ENCODE measurements at regions of chr13 and their contacts with region 1.

Region 1: DNA sequence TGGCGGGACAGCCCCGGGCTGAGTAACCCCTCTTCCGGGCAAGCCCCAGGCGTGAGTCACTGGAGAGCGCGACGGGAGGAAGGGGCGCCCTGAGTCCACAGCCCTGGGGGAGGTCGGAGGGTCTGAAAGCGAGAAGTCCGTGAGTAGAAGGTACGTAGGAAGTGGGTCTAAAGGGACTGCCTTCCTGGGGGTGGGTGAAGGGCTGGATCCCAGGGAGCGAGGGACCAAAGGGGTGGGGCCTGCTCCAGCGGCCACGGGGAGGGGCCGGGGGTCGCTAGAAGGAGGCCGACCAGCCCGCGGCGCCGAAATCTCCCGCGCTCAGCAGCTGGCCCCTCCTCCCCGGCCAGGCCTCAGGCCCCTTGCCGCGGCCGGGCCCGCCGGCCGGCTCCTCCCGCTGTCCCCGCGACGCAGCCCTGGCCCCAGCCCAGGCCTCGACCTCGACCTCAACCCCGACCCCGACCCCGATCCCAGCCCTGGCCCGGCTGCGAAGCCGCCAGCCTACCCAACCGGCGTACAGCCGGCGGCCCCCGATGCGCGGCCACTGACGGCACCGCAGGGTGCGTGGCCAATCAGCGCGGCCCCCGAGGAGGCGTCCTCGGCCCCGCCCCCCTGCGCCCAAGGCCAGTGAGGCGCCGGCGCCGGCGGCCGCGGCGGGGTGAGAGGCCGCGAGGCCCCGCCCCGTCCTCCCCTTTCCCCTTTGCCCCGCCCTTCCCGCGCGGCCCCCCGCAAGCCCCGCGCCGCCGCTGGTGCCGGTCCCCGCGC is 22.6 kb downstream of the IPO5 start:
- DNase-seq: peak; percentile 92 to 96 (median 93)
- H3K4me3 ChIP-seq: peak overlapping the region; percentile 72
- H3K27ac ChIP-seq: peak overlapping the region; percentile 92 to 96
- H3K4me1 ChIP-seq: no peaks in the 10 kb centered on the region
- H3K27me3 ChIP-seq: no peaks in the 10 kb centered on the region
- CTCF ChIP-seq: no peak
- EP300 ChIP-seq: no peak
- POLR2A ChIP-seq: peak; percentile 92

Region 2: DNA sequence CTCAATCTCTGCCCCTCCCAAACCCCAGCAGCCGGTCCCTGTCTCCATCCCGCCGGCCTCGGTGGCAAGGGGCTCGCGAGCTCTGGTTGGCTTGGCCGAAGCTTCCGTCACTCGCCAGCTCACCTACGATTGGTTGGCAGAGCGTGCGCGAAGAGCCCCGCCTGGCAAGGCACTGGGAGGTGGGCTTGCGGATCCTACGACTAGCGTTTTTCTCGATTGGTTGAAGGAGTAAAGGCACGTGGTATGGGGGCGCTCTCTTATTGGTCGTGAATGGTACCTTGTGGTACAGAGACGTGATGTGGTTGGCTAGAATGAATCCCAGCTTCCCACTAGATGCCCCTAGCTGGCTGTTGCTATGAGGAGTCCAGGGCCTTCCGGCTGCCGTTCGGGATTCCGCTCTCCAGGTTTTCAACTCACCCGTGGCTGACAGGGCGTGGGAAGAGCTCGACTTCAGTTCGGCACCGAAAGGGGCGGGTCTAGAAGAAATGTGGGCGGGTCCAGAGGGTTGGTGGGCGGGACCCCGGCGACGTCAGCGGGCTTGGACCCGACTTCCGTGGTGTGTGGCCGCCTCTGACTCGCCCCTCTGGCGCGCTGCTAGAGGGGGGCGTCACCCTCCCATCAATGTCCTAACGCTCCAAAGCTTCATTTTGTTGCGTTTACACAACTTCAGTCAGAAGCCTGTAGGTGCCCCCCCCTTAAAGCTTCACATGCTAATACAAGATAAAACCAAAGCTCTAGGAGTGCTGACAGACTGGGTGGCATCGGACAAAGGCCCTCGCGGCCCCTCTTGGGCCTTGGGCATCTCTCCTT is 542.9 kb before region 1 on chr13:
- intact Hi-C with region 1: loop called in 1 of 4 experiments (anchors 5 kb)
- DNase-seq: peak; percentile 97 to 100 (median 98)
- H3K4me3 ChIP-seq: peak overlapping the region; percentile 97
- H3K27ac ChIP-seq: peak overlapping the region; percentile 92 to 99
- H3K4me1 ChIP-seq: peaks cover 1% of the 10 kb centered on the region
- H3K27me3 ChIP-seq: no peaks in the 10 kb centered on the region
- CTCF ChIP-seq: no peak
- EP300 ChIP-seq: no peak
- POLR2A ChIP-seq: peak; percentile 26